Naive thymus-derived CD4-positive, alpha-beta T cell (primary cell): ENCODE measurements at regions of chr12 and their contacts with region 1.

Region 1: DNA sequence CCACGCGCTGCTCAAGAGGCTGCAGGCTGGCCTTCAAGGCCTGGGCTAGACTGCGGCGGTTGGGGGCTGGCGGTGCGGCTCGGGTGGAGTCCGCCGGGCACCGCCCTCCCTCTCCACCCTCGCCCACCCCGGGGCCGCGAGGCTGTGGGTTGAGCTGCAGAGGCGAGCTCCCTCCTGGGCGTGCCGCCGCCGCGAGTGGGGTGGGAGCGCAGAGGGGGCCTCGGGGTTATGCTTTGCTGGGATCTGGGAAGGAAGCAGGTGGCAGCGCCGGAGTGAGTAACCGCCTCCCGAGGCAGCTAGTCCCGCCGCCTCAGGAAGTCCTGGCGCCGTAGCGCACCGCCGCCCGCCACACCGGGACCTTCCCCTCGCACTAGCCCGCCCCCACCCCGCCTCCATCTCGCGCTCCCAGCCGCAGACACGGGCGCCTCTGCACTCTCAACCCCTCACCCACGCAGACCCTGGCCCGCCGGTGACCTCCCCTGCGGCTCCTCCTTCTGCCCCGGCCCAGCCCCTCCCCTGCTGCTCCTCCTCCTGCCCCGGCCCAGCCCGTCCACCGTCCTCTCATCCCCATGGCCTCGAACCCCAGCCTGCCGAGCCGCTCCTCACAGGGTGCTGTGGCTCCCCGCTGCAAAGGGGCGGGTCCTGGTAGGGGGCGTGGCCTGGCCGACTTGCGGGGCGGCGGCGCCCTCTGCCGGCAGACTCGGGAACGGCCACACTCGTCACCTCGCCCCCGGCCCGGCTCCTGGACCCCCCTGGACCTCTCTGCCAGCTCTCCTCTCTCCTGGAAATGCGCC is 16.6 kb downstream of the TAMALIN start:
- DNase-seq: peak; percentile 80 to 98 (median 90)
- ATAC-seq: peak; percentile 80
- H3K4me3 ChIP-seq: peak overlapping the region; percentile 71
- H3K4me3 Mint-ChIP-seq: peak overlapping the region; percentile 77 to 96 (median 87)
- H3K27ac ChIP-seq: peak overlapping the region; percentile 69
- H3K27ac Mint-ChIP-seq: peak overlapping the region; percentile 85 to 99 (median 93)
- H3K4me1 ChIP-seq: peaks cover 17 to 29% of the 10 kb centered on the region in 2 donors
- H3K4me1 Mint-ChIP-seq: peaks cover 34 to 49% (median 40%) of the 10 kb centered on the region in 7 donors
- H3K27me3 ChIP-seq: no peaks in the 10 kb centered on the region
- H3K27me3 Mint-ChIP-seq: peaks cover 0 to 16% (median 0%) of the 10 kb centered on the region in 5 donors

Region 2: GRCh38 chr12:51631591-51631990 is 391.8 kb before region 1 on chr12:
- CTCF ChIA-PET with region 1: no interaction called
- POLR2A ChIA-PET with region 1: no interaction called
- intact Hi-C with region 1: no loop called
- DNase-seq: no peak
- ATAC-seq: no peak
- H3K4me3 ChIP-seq: no peak overlapping the region
- H3K4me3 Mint-ChIP-seq: no peak overlapping the region
- H3K27ac ChIP-seq: no peak overlapping the region
- H3K27ac Mint-ChIP-seq: no peak overlapping the region
- H3K4me1 ChIP-seq: no peaks in the 10 kb centered on the region
- H3K4me1 Mint-ChIP-seq: no peaks in the 10 kb centered on the region
- H3K27me3 ChIP-seq: no peaks in the 10 kb centered on the region
- H3K27me3 Mint-ChIP-seq: peaks cover 10 to 49% (median 20%) of the 10 kb centered on the region in 5 donors

Region 3: DNA sequence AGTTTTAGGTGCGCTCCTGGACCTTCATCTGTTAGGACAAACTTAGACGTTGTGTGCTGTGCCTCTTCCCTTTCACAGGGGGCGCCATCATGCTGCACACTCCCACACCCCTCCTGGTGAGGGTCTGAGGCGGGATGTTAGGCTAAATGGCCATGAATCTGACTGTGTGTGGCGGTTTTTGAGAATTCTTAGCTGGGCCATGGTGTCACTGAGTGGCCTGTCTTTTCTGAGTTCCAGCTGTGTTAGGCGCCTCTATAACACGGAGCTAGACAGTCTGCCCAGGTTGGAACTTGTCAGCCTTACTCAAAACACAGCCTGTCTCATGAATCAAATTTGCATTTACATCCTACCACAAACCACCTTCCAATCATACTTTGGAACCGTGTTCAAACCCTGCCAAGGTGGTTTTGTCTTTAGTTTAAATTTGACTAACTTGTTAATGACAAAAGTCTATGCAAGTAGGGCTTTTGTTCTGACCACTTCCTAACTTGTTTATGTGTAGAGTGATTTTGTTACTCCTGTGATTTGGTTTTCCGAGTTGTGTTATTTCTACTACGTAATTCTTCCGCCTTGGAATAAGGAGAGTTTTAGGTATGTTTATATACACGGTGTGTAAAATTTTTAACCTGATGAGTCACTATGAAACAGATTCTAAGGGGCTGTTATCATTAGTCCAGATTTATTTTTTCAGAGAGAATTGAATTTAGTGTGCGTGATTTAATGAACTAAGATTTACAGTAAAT is 52.3 kb before region 1 on chr12:
- CTCF ChIA-PET with region 1: interaction called, 8 read pairs
- POLR2A ChIA-PET with region 1: no interaction called
- intact Hi-C with region 1: loop called in 1 of 2 experiments (anchors 5 kb)
- DNase-seq: peak in 2 of 9 donors; percentile 26 to 43
- ATAC-seq: peak; percentile 53
- H3K4me3 ChIP-seq: peak overlapping the region; percentile 1
- H3K4me3 Mint-ChIP-seq: peak overlapping the region; percentile 41 to 85 (median 72)
- H3K27ac ChIP-seq: no peak overlapping the region
- H3K27ac Mint-ChIP-seq: peak overlapping the region; percentile 43 to 87 (median 68)
- H3K4me1 ChIP-seq: peaks cover 56 to 64% of the 10 kb centered on the region in 2 donors
- H3K4me1 Mint-ChIP-seq: peaks cover 60 to 76% (median 69%) of the 10 kb centered on the region in 7 donors
- H3K27me3 ChIP-seq: no peaks in the 10 kb centered on the region
- H3K27me3 Mint-ChIP-seq: peaks cover 0 to 26% (median 0%) of the 10 kb centered on the region in 5 donors

Region 4: GRCh38 chr12:52004042-52004648 is 19.2 kb before region 1 on chr12:
- CTCF ChIA-PET with region 1: interaction called, 319 read pairs
- POLR2A ChIA-PET with region 1: interaction called, 162 read pairs
- intact Hi-C with region 1: loop called (anchors 1 kb)
- DNase-seq: no peak
- ATAC-seq: no peak
- H3K4me3 ChIP-seq: no peak overlapping the region
- H3K4me3 Mint-ChIP-seq: no peak overlapping the region
- H3K27ac ChIP-seq: no peak overlapping the region
- H3K27ac Mint-ChIP-seq: peak overlapping the region in 2 of 9 donors; percentile 24 to 67
- H3K4me1 ChIP-seq: peaks cover 0 to 11% of the 10 kb centered on the region in 2 donors
- H3K4me1 Mint-ChIP-seq: peaks cover 6 to 27% (median 19%) of the 10 kb centered on the region in 7 donors
- H3K27me3 ChIP-seq: no peaks in the 10 kb centered on the region
- H3K27me3 Mint-ChIP-seq: peaks cover 0 to 45% (median 0%) of the 10 kb centered on the region in 5 donors

Region 5: GRCh38 chr12:52061850-52062592 is 38.6 kb after region 1 on chr12:
- CTCF ChIA-PET with region 1: interaction called, 457 read pairs
- POLR2A ChIA-PET with region 1: interaction called, 3 read pairs
- intact Hi-C with region 1: no loop called
- DNase-seq: no peak
- ATAC-seq: no peak
- H3K4me3 ChIP-seq: no peak overlapping the region
- H3K4me3 Mint-ChIP-seq: no peak overlapping the region
- H3K27ac ChIP-seq: no peak overlapping the region
- H3K27ac Mint-ChIP-seq: no peak overlapping the region
- H3K4me1 ChIP-seq: no peaks in the 10 kb centered on the region
- H3K4me1 Mint-ChIP-seq: peaks cover 0 to 4% (median 0%) of the 10 kb centered on the region in 7 donors
- H3K27me3 ChIP-seq: no peaks in the 10 kb centered on the region
- H3K27me3 Mint-ChIP-seq: peaks cover 0 to 5% (median 0%) of the 10 kb centered on the region in 5 donors

Region 6: GRCh38 chr12:52121824-52122539 is 98.6 kb after region 1 on chr12:
- CTCF ChIA-PET with region 1: interaction called, 13 read pairs
- POLR2A ChIA-PET with region 1: interaction called, 3 read pairs
- intact Hi-C with region 1: loop called (anchors 1 kb)
- DNase-seq: peak in 8 of 9 donors; percentile 24 to 73 (median 46)
- ATAC-seq: peak; percentile 55
- H3K4me3 ChIP-seq: no peak overlapping the region
- H3K4me3 Mint-ChIP-seq: peak overlapping the region in 4 of 10 donors; percentile 20 to 41 (median 24)
- H3K27ac ChIP-seq: no peak overlapping the region
- H3K27ac Mint-ChIP-seq: no peak overlapping the region
- H3K4me1 ChIP-seq: peaks cover 0 to 3% of the 10 kb centered on the region in 2 donors
- H3K4me1 Mint-ChIP-seq: peaks cover 4 to 19% (median 12%) of the 10 kb centered on the region in 7 donors
- H3K27me3 ChIP-seq: no peaks in the 10 kb centered on the region
- H3K27me3 Mint-ChIP-seq: peaks cover 9 to 22% (median 21%) of the 10 kb centered on the region in 5 donors